ENCODE measurements at regions of chr7 and their contacts with region 1.

Region 1: DNA sequence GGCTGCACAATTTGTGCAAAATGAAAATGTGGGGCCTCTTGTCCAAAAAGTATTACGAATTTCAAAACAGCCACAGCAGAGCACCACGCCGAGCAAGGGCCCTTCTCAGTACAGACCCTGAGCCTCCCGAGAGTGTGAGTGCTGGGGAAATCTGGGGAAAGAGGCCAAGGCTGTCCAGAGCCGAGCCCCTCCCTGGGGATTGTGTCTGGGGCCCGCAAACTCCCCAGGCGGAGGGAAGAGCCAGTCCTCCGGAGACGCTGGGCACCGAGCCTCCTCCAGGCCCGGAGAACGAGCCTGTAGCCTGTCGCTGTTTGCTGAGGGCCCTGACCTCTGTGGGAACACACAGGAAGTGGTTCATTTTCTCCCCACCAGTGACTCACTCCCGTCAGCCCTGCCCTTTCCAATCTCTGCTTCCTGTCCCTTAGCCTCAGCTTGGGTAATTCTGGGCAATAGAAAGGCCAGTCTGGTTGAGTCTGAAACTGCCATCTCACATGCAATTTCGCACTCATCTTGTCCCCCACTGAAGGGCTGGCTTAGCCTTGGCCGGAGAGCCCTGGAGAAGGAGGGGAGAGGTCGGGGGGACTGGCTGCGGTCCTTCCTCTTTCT is 19.5 kb upstream of the GNA12 start:
- DNase-seq: peak; percentile 71 to 84
- ATAC-seq: peak; percentile 89 to 95 (median 95)
- H3K4me3 ChIP-seq: no peak overlapping the region
- H3K4me3 Mint-ChIP-seq: peak overlapping the region; percentile 70
- H3K27ac ChIP-seq: peak overlapping the region; percentile 69
- H3K27ac Mint-ChIP-seq: peak overlapping the region; percentile 63 to 91
- H3K4me1 ChIP-seq: peaks cover 31% of the 10 kb centered on the region
- H3K4me1 Mint-ChIP-seq: peaks cover 20 to 22% of the 10 kb centered on the region in 2 donors
- H3K27me3 ChIP-seq: no peaks in the 10 kb centered on the region
- H3K27me3 Mint-ChIP-seq: peaks cover 7 to 13% of the 10 kb centered on the region in 2 donors
- CTCF ChIP-seq: no peak

Region 2: GRCh38 chr7:2851497-2851896 is 12.1 kb before region 1 on chr7:
- intact Hi-C with region 1: loop called (anchors 1 kb)
- DNase-seq: peak in 1 of 2 donors; percentile 39
- ATAC-seq: peak; percentile 69 to 84 (median 78)
- H3K4me3 ChIP-seq: no peak overlapping the region
- H3K4me3 Mint-ChIP-seq: no peak overlapping the region
- H3K27ac ChIP-seq: peak overlapping the region; percentile 21
- H3K27ac Mint-ChIP-seq: no peak overlapping the region
- H3K4me1 ChIP-seq: peaks cover 10% of the 10 kb centered on the region
- H3K4me1 Mint-ChIP-seq: peaks cover 0 to 5% of the 10 kb centered on the region in 2 donors
- H3K27me3 ChIP-seq: no peaks in the 10 kb centered on the region
- H3K27me3 Mint-ChIP-seq: no peaks in the 10 kb centered on the region
- CTCF ChIP-seq: no peak

Region 3: GRCh38 chr7:3154912-3155494 is 291.4 kb after region 1 on chr7:
- intact Hi-C with region 1: loop called (anchors 1 kb)
- DNase-seq: peak; percentile 46 to 84
- ATAC-seq: peak; percentile 74 to 99 (median 87)
- H3K4me3 ChIP-seq: no peak overlapping the region
- H3K4me3 Mint-ChIP-seq: no peak overlapping the region
- H3K27ac ChIP-seq: no peak overlapping the region
- H3K27ac Mint-ChIP-seq: peak overlapping the region; percentile 37 to 74
- H3K4me1 ChIP-seq: peaks cover 8% of the 10 kb centered on the region
- H3K4me1 Mint-ChIP-seq: peaks cover 12 to 21% of the 10 kb centered on the region in 2 donors
- H3K27me3 ChIP-seq: no peaks in the 10 kb centered on the region
- H3K27me3 Mint-ChIP-seq: no peaks in the 10 kb centered on the region
- CTCF ChIP-seq: peak; percentile 87

Region 4: GRCh38 chr7:3200504-3200903 is 336.9 kb after region 1 on chr7:
- intact Hi-C with region 1: loop called (anchors 1 kb)
- DNase-seq: peak in 1 of 2 donors; percentile 38
- ATAC-seq: peak in 2 of 3 donors; percentile 53 to 74
- H3K4me3 ChIP-seq: no peak overlapping the region
- H3K4me3 Mint-ChIP-seq: no peak overlapping the region
- H3K27ac ChIP-seq: no peak overlapping the region
- H3K27ac Mint-ChIP-seq: no peak overlapping the region
- H3K4me1 ChIP-seq: peaks cover 5% of the 10 kb centered on the region
- H3K4me1 Mint-ChIP-seq: peaks cover 8 to 11% of the 10 kb centered on the region in 2 donors
- H3K27me3 ChIP-seq: no peaks in the 10 kb centered on the region
- H3K27me3 Mint-ChIP-seq: peaks cover 15 to 18% of the 10 kb centered on the region in 2 donors
- CTCF ChIP-seq: no peak

Region 5: GRCh38 chr7:3673524-3673923 is 810.0 kb after region 1 on chr7:
- intact Hi-C with region 1: loop called (anchors 10 kb)
- DNase-seq: peak in 1 of 2 donors; percentile 68
- ATAC-seq: no peak
- H3K4me3 ChIP-seq: no peak overlapping the region
- H3K4me3 Mint-ChIP-seq: no peak overlapping the region
- H3K27ac ChIP-seq: no peak overlapping the region
- H3K27ac Mint-ChIP-seq: no peak overlapping the region
- H3K4me1 ChIP-seq: no peaks in the 10 kb centered on the region
- H3K4me1 Mint-ChIP-seq: no peaks in the 10 kb centered on the region
- H3K27me3 ChIP-seq: no peaks in the 10 kb centered on the region
- H3K27me3 Mint-ChIP-seq: peaks cover 5 to 6% of the 10 kb centered on the region in 2 donors
- CTCF ChIP-seq: no peak

Region 6: DNA sequence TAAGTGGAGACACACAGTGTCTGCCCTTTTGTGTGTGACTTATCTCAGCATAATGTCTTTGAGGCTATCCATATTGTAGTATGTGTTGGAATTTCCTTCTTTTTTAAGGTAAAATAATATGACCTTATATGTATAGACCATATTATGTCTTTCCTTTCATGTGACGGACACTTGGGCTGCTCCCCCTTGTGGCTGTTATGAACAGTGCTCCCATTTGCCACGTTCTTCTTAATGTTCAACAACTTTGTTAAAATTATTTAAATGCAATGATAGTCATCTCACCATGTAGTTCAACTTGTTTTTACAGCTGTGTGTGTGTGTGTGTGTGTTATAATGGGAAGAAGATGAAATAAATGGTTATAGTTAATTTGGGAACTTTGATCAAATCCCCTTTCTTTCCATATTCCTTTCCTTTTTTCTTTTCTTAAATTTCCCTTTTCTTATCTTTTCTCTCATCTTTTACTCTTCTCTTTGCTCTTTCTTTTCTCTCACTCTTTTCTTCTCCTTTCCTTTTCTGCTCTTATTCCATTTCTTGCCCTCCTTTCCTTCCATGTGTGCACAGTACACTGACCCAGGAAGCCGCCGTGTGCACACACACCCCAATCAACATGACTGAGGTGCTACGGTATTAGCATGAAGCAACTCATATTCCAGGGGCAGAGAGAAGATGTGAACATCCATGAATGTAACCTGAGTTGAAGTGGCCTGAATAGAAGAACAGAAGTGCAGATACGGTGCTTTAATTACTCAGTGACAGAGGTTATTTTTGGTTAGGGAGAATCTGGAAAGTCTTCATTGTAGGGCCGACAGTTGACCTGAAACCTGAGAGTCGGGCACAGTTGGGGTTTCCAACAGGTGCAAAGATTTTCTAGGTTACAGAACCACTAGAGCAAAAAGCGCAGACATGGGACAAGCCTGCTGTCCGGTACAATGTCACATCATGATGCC is 1034.1 kb after region 1 on chr7:
- intact Hi-C with region 1: loop called (anchors 1 kb)
- DNase-seq: peak in 1 of 2 donors; percentile 77
- ATAC-seq: peak; percentile 47 to 65 (median 60)
- H3K4me3 ChIP-seq: no peak overlapping the region
- H3K4me3 Mint-ChIP-seq: no peak overlapping the region
- H3K27ac ChIP-seq: no peak overlapping the region
- H3K27ac Mint-ChIP-seq: no peak overlapping the region
- H3K4me1 ChIP-seq: no peaks in the 10 kb centered on the region
- H3K4me1 Mint-ChIP-seq: no peaks in the 10 kb centered on the region
- H3K27me3 ChIP-seq: no peaks in the 10 kb centered on the region
- H3K27me3 Mint-ChIP-seq: peaks cover 32 to 42% of the 10 kb centered on the region in 2 donors
- CTCF ChIP-seq: peak; percentile 95